SK-N-SH (cell line): ENCODE measurements at regions of chr19 and their contacts with region 1.

Region 1: DNA sequence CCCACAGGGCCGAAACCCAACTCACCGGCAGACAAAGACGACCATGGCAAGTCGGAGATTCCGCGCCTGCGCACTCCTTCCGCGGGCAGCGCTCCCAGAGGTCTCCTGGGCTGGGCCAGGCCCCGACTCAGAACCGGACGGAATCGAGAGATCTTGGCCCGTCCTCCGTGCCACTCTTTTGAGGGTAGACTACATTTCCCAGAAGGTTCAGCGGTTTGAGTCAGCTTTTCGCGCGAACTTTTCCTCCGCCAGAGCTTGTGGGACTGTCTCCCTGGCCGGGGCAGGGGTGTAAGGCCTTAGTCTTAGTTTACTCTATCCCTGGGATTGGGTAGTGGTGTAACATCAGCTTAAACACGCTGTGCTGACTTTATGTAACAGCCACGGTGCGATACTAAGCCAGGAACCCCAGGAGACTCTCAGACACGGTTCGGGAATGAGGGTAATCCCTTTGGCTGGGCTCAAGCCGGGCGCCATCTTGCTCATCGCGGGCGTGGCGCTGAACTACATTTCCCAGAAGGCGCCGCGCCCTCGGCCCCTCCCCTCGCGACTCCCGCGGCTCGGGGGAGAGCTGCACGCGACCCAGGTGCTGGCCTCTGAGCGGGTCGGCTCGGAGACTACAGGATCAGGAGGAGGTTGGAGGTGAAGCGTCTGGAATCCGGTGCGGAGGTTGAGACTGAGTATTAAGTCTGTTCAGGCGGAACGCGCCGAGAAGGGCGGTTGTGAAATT is at the start of gene ZNF260:
- DNase-seq: peak; percentile 92
- H3K4me3 ChIP-seq: peak within 1 kb of the TSS; percentile 73 to 74
- H3K27ac ChIP-seq: peak within 1 kb of the TSS; percentile 86 to 96
- H3K4me1 ChIP-seq: no peaks in the 10 kb centered on the region; a peak in 2 of 4 replicates
- H3K27me3 ChIP-seq: no peaks in the 10 kb centered on the region
- CTCF ChIP-seq: no peak
- EP300 ChIP-seq: no peak
- RAD21 ChIP-seq: 0 out of 2 replicates have a peak, but pooled peaks have one; percentile 13
- polyA plus RNA-seq, gene ZNF260: 2.6 and 4.7 TPM in 2 replicates

Region 2: DNA sequence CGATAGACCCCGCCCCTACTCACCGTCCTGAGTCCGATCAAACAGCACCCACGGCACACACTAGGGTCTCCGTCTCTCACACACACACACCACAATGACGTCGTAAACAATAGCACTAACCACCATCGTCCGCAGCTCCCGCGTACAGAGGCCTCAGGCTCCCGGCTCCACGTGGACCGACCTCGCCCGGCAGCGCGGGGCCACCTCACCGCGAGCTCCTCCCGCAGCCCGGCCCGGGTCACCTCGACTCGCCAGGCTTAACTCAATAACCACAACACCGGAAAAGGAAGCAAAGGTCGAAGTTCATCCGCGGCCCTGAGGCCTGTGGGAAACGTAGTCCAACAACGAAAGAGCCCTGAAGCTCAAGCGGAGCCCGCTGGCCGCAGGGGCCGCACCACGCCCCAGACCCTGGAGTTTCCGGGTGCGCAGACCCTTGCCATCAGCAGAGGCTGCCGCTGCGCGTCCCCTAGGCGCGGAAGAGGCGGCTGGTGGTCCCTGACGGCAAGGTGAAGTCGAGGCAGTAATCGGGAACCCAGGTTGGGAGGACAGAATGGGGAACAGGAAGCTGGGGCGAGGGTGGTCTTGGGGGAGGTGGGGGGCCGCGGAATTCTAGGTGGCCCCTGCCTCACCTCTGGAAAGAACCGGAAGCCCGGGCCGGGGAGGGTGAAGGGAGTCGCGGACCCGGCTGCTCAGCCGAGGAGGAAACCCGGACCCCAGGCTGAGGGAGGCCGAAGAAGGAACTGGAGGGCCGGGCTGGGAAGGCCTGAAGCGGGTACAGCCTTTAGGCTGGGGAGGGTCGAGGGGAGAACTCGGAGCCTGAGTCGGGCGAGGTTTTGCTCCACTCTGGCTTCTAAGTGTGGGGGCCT is 44.9 kb after region 1 on chr19 and contains the start of gene ZNF529:
- CTCF ChIA-PET with region 1: interaction called, 3 read pairs
- POLR2A ChIA-PET with region 1: interaction called, 21 read pairs
- DNase-seq: peak; percentile 94
- H3K4me3 ChIP-seq: peak within 1 kb of the TSS; percentile 81 to 99
- H3K27ac ChIP-seq: peak within 1 kb of the TSS; percentile 71 to 79
- H3K4me1 ChIP-seq: peaks cover 0 to 6% of the 10 kb centered on the region in 2 experiments; a peak in 3 of 4 replicates
- H3K27me3 ChIP-seq: no peaks in the 10 kb centered on the region
- CTCF ChIP-seq: no peak
- EP300 ChIP-seq: no peak
- RAD21 ChIP-seq: no peak; the same call in 1 of the 2 replicates
- polyA plus RNA-seq, gene ZNF529: 5.6 and 8.6 TPM in 2 replicates

Region 3: GRCh38 chr19:36652958-36653357 is 124.6 kb after region 1 on chr19:
- CTCF ChIA-PET with region 1: no interaction called
- POLR2A ChIA-PET with region 1: no interaction called
- DNase-seq: no peak
- H3K4me3 ChIP-seq: no peak overlapping the region
- H3K27ac ChIP-seq: no peak overlapping the region
- H3K4me1 ChIP-seq: no peaks in the 10 kb centered on the region
- H3K27me3 ChIP-seq: no peaks in the 10 kb centered on the region
- CTCF ChIP-seq: no peak
- EP300 ChIP-seq: no peak
- RAD21 ChIP-seq: no peak